Heart right ventricle (tissue), 16 donors: ENCODE measurements at regions of chrX and their contacts with region 1.

Region 1: GRCh38 chrX:119118780-119119395 is 8.7 kb downstream of the KIAA1210 start:
- DNase-seq: peak; percentile 25 to 40
- ATAC-seq: peak in 3 of 8 donors; percentile 51 to 64 (median 55)
- H3K4me3 ChIP-seq: no peak overlapping the region
- H3K27ac ChIP-seq: no peak overlapping the region
- H3K4me1 ChIP-seq: no peaks in the 10 kb centered on the region
- H3K27me3 ChIP-seq: peaks cover 0 to 27% (median 0%) of the 10 kb centered on the region in 7 donors
- CTCF ChIP-seq: peak; percentile 41 to 84 (median 70)

Region 2: GRCh38 chrX:119194621-119195020 is 75.7 kb after region 1 on chrX:
- intact Hi-C with region 1: loop called in 1 of 10 experiments (anchors 5 kb)
- DNase-seq: no peak
- ATAC-seq: no peak
- H3K4me3 ChIP-seq: no peak overlapping the region
- H3K27ac ChIP-seq: no peak overlapping the region
- H3K4me1 ChIP-seq: no peaks in the 10 kb centered on the region
- H3K27me3 ChIP-seq: no peaks in the 10 kb centered on the region
- CTCF ChIP-seq: peak in 6 of 9 donors; percentile 19 to 41 (median 32)

Region 3: GRCh38 chrX:119222932-119223331 is 104.0 kb after region 1 on chrX:
- intact Hi-C with region 1: loop called in 2 of 10 experiments (anchors 5 kb)
- DNase-seq: no peak
- ATAC-seq: no peak
- H3K4me3 ChIP-seq: no peak overlapping the region
- H3K27ac ChIP-seq: no peak overlapping the region
- H3K4me1 ChIP-seq: no peaks in the 10 kb centered on the region
- H3K27me3 ChIP-seq: peaks cover 0 to 45% (median 0%) of the 10 kb centered on the region in 7 donors
- CTCF ChIP-seq: no peak

Region 4: GRCh38 chrX:119266364-119266995 is 147.6 kb after region 1 on chrX:
- intact Hi-C with region 1: loop called in 1 of 10 experiments (anchors 2 kb)
- DNase-seq: peak in 1 of 2 donors; percentile 3
- ATAC-seq: no peak
- H3K4me3 ChIP-seq: no peak overlapping the region
- H3K27ac ChIP-seq: no peak overlapping the region
- H3K4me1 ChIP-seq: peaks cover 0 to 4% (median 0%) of the 10 kb centered on the region in 9 donors
- H3K27me3 ChIP-seq: peaks cover 0 to 65% (median 0%) of the 10 kb centered on the region in 7 donors
- CTCF ChIP-seq: peak; percentile 13 to 69 (median 61)